H1 (cell line): ENCODE measurements at regions of chr9 and their contacts with region 1.

Region 1: GRCh38 chr9:31124389-31124788 is 1260.1 kb upstream of the ACO1 start:
- DNase-seq: no peak
- H3K4me3 ChIP-seq: no peak overlapping the region
- H3K27ac ChIP-seq: no peak overlapping the region
- H3K4me1 ChIP-seq: no peaks in the 10 kb centered on the region
- H3K27me3 ChIP-seq: no peaks in the 10 kb centered on the region
- CTCF ChIP-seq: no peak
- EP300 ChIP-seq: no peak
- POLR2A ChIP-seq: no peak
- RAD21 ChIP-seq: no peak

Region 2: GRCh38 chr9:31140316-31140715 is 15.9 kb after region 1 on chr9:
- CTCF ChIA-PET with region 1: interaction called, 11 read pairs
- POLR2A ChIA-PET with region 1: no interaction called
- DNase-seq: no peak
- H3K4me3 ChIP-seq: no peak overlapping the region
- H3K27ac ChIP-seq: no peak overlapping the region
- H3K4me1 ChIP-seq: no peaks in the 10 kb centered on the region
- H3K27me3 ChIP-seq: no peaks in the 10 kb centered on the region
- CTCF ChIP-seq: peak in 2 of 3 experiments; percentile 22 to 33; a peak in 2 of 4 replicates
- EP300 ChIP-seq: no peak
- POLR2A ChIP-seq: no peak
- RAD21 ChIP-seq: peak; percentile 43 to 44